ENCODE measurements at regions of chr17 and their contacts with region 1.

Region 1: DNA sequence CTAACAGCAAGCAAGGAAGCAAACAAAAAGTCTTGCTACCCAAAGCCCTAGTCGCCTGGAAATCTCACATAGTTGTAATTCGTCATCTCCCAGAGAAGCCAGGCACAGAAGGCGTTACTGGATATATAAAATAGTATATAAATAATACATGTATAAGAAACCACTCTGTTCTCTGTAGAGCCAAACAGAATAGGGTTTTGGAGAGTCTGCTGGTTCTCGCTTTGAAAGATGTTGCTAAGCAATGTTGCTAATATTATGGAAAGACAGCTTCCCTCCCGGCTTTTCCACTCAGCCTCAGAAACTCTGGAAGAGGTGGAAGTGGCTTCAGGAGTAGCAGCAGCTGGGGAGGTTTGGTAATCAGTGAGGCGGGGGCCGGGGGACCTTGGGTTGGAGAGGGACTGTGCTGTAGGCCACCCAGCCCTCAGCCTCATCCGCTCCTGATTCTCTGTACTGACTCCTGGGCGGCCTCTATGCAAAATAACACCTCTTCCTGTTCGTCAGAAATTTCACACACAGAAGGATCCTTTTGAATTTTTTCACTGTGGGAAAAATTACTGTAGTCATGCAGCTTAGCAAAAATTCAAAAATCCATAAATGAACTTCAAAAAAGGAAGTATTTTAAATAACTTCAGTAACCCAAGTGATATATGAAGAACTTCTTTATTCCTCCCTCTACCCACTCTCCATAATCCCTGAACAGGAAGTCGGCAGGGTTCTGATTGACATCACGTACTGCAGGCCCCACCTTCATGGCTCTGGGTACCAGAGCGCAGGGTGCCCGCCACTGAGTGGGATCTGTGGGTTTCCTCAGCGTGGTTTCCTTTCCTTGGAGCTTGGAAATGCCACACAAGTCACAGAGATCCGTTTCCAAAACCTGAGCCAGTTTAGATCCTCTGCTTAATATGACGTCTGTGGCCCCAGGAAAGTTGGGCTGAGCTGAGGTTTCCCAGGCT is 51.4 kb downstream of the RAP1GAP2 start:
- DNase-seq: no peak
- H3K4me3 ChIP-seq: no peak overlapping the region
- H3K27ac ChIP-seq: no peak overlapping the region
- H3K27me3 ChIP-seq: peaks cover 2% of the 10 kb centered on the region
- CTCF ChIP-seq: no peak

Region 2: DNA sequence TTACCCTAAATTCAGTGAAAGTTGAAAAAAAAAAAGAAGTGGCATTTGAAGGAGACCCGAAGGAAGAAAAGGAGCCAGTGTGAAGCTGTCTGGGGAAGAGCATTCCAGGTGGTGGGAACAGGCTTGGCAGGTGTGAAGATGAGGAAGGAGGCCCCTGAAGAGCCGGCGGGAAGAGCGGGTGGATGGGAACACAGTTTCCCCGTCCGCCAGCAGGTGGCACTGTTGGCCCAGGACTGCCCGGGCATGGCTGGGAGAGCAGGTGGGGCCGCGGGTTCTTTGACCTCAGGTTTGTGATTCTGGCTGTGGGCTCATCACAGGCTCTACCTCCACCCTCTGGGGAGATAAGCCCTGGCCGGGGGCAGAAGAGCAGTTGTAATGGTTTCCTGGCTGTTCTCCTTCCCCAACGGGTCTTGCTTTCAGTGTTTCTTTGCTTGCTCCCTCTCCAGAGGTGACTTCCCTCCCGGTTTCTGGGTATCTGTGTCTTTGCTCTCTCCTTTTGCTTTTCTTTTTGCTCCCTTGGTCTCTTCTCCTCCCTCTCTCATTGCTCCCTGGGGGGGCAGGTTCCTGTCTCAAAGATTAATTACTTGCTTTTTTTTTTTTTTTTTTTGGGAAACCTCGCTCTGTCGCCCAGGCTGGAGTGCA is 19.1 kb before region 1 on chr17:
- CTCF ChIA-PET with region 1: interaction called, 12 read pairs
- POLR2A ChIA-PET with region 1: no interaction called
- DNase-seq: no peak
- H3K4me3 ChIP-seq: no peak overlapping the region
- H3K27ac ChIP-seq: no peak overlapping the region
- H3K27me3 ChIP-seq: peaks cover under 1% of the 10 kb centered on the region
- CTCF ChIP-seq: peak; percentile 91